Activated B cell treated with CpG ODN at 0.5 μM for 24 hours (primary cell): ENCODE measurements at regions of chr10 and their contacts with region 1.

Region 1: GRCh38 chr10:101141616-101142532 is 10.8 kb downstream of the TLX1 start:
- DNase-seq: peak; percentile 75
- ATAC-seq: peak; percentile 92
- H3K4me3 Mint-ChIP-seq: no peak overlapping the region
- H3K27ac Mint-ChIP-seq: no peak overlapping the region
- H3K4me1 Mint-ChIP-seq: peaks cover 23% of the 10 kb centered on the region
- H3K27me3 Mint-ChIP-seq: peaks cover 75% of the 10 kb centered on the region
- CTCF ChIP-seq: no peak

Region 2: GRCh38 chr10:101050208-101051069 is 91.4 kb before region 1 on chr10:
- CTCF ChIA-PET with region 1: interaction called, 29 read pairs
- POLR2A ChIA-PET with region 1: no interaction called
- intact Hi-C with region 1: no loop called
- DNase-seq: peak; percentile 78
- ATAC-seq: peak; percentile 93
- H3K4me3 Mint-ChIP-seq: peak overlapping the region; percentile 24
- H3K27ac Mint-ChIP-seq: no peak overlapping the region
- H3K4me1 Mint-ChIP-seq: peaks cover 15% of the 10 kb centered on the region
- H3K27me3 Mint-ChIP-seq: peaks cover 38% of the 10 kb centered on the region
- CTCF ChIP-seq: peak; percentile 59

Region 3: GRCh38 chr10:101067356-101068083 is 74.4 kb before region 1 on chr10:
- CTCF ChIA-PET with region 1: interaction called, 71 read pairs
- POLR2A ChIA-PET with region 1: interaction called, 9 read pairs
- intact Hi-C with region 1: no loop called
- DNase-seq: peak; percentile 63
- ATAC-seq: peak; percentile 64
- H3K4me3 Mint-ChIP-seq: peak overlapping the region; percentile 92
- H3K27ac Mint-ChIP-seq: no peak overlapping the region
- H3K4me1 Mint-ChIP-seq: peaks cover 51% of the 10 kb centered on the region
- H3K27me3 Mint-ChIP-seq: peaks cover 8% of the 10 kb centered on the region
- CTCF ChIP-seq: peak; percentile 76

Region 4: GRCh38 chr10:101120884-101121653 is 20.8 kb before region 1 on chr10:
- CTCF ChIA-PET with region 1: interaction called, 26 read pairs
- POLR2A ChIA-PET with region 1: interaction called, 3 read pairs
- intact Hi-C with region 1: loop called (anchors 2 kb)
- DNase-seq: peak; percentile 40
- ATAC-seq: peak; percentile 89
- H3K4me3 Mint-ChIP-seq: peak overlapping the region; percentile 97
- H3K27ac Mint-ChIP-seq: peak overlapping the region; percentile 68
- H3K4me1 Mint-ChIP-seq: peaks cover 29% of the 10 kb centered on the region
- H3K27me3 Mint-ChIP-seq: peaks cover 38% of the 10 kb centered on the region
- CTCF ChIP-seq: no peak

Region 5: DNA sequence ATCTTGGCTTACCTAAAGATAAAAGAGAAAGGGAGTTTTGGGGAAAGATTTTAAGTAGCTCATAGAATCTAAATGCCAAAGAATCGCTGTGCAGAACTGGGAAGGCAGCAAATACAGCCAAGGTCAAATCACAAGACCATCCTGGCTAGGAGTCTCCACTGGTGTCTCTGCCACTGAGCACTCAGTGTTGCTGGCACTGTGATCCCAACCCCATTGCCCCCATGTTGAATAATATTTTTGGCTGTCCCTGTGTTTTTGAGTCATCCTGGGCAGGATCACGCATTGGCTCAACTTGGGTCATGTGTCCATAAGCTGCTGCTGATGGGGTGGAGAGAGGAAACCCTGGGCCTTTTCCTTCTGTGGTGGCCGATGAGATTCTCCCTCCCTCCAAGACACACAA is 10.4 kb after region 1 on chr10:
- CTCF ChIA-PET with region 1: interaction called, 12 read pairs
- POLR2A ChIA-PET with region 1: interaction called, 3 read pairs
- intact Hi-C with region 1: no loop called
- DNase-seq: no peak
- ATAC-seq: no peak
- H3K4me3 Mint-ChIP-seq: no peak overlapping the region
- H3K27ac Mint-ChIP-seq: no peak overlapping the region
- H3K4me1 Mint-ChIP-seq: no peaks in the 10 kb centered on the region
- H3K27me3 Mint-ChIP-seq: peaks cover 48% of the 10 kb centered on the region
- CTCF ChIP-seq: no peak